H1 (cell line): ENCODE measurements at regions of chr5 and their contacts with region 1.

Region 1: DNA sequence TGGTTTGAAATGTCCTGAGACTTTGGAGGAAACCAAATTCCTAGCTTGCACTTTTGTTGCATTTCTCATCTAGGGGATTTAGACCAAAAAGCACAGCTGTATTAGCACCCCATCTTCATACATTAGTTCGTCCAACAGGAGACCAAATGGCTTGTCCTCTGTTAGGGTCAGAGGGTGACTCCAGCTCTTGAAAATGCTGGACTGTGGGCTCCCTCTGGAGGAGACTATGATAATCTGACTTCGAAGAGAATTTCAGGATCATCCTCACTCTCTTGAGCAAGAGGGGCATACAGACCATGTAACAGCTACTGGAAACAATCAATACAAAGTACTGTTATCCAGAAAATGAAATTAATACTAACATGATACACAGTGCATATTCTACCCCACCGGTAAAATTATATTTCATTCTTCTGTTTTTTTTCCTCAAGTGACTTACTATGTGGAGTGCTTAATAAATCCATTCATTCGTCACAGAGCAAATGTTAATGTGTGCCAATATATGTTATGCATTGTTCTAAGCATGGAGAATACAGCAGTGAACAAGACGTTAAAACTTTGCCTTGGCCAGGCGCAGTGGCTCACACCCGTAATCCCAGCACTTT is 63.7 kb upstream of the PPP2CA start:
- DNase-seq: peak; percentile 46 to 59
- H3K4me3 ChIP-seq: no peak overlapping the region
- H3K27ac ChIP-seq: no peak overlapping the region
- H3K4me1 ChIP-seq: no peaks in the 10 kb centered on the region
- H3K27me3 ChIP-seq: no peaks in the 10 kb centered on the region
- CTCF ChIP-seq: peak in 2 of 3 experiments; percentile 81 to 92; a peak in 3 of 4 replicates
- EP300 ChIP-seq: no peak
- POLR2A ChIP-seq: no peak
- RAD21 ChIP-seq: peak; percentile 98 to 99

Region 2: GRCh38 chr5:133773247-133774202 is 516.1 kb before region 1 on chr5:
- CTCF ChIA-PET with region 1: no interaction called
- POLR2A ChIA-PET with region 1: no interaction called
- DNase-seq: no peak
- H3K4me3 ChIP-seq: no peak overlapping the region
- H3K27ac ChIP-seq: no peak overlapping the region
- H3K4me1 ChIP-seq: no peaks in the 10 kb centered on the region
- H3K27me3 ChIP-seq: no peaks in the 10 kb centered on the region; a peak in 1 of 7 replicates
- CTCF ChIP-seq: peak in 1 of 3 experiments; percentile 22; a peak in 1 of 4 replicates
- EP300 ChIP-seq: no peak
- POLR2A ChIP-seq: no peak
- RAD21 ChIP-seq: peak; percentile 34 to 43

Region 3: DNA sequence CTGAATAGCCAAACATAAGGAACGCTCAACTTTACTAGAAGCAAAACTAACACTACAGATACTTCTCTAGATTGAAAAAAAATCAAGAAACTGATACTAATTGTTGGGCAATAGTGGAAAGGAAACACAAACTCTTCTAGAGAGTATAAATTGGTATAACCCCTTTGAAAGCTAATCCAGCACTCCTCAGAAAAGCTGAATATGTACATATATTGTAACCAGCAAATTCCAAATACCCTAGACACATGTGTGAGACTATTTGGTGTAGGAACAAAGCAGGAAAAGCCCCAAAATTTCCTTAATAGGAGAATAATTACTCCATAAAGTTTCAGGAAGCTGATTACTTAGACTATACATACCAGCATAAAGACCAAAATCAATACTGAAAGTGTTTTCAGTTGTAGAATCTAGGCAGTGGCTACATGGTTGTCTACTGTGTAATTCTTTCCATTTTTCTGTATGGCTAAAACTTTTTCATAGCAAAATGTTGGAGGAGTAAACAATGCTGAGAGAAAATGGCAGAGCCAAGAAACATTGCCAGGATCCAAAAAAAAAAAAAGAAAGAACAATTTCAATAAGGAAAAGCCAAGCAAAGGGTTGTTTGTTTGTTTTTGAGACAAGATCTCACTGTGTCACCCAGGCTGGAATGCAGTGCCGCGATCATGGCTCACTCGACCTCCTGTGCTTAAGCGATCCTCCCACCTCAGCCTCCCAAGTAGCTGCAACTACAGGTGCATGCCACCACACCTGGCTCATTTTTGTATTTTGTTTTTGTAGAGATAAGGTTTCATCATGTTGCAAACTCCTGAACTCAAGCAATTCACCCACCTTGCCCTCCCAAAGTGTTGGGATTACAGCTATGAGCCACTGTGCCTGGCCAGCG is 127.9 kb before region 1 on chr5:
- CTCF ChIA-PET with region 1: interaction called, 13 read pairs
- POLR2A ChIA-PET with region 1: no interaction called
- DNase-seq: no peak
- H3K4me3 ChIP-seq: no peak overlapping the region
- H3K27ac ChIP-seq: no peak overlapping the region
- H3K4me1 ChIP-seq: no peaks in the 10 kb centered on the region
- H3K27me3 ChIP-seq: no peaks in the 10 kb centered on the region
- CTCF ChIP-seq: no peak
- EP300 ChIP-seq: no peak
- POLR2A ChIP-seq: no peak
- RAD21 ChIP-seq: no peak

Region 4: GRCh38 chr5:134184155-134185135 is 105.2 kb before region 1 on chr5:
- CTCF ChIA-PET with region 1: interaction called, 120 read pairs
- POLR2A ChIA-PET with region 1: interaction called, 3 read pairs
- DNase-seq: peak; percentile 38 to 90
- H3K4me3 ChIP-seq: no peak overlapping the region
- H3K27ac ChIP-seq: no peak overlapping the region
- H3K4me1 ChIP-seq: no peaks in the 10 kb centered on the region
- H3K27me3 ChIP-seq: no peaks in the 10 kb centered on the region
- CTCF ChIP-seq: peak; percentile 93 to 97 (median 97)
- EP300 ChIP-seq: no peak
- POLR2A ChIP-seq: no peak
- RAD21 ChIP-seq: peak; percentile 92 to 94

Region 5: DNA sequence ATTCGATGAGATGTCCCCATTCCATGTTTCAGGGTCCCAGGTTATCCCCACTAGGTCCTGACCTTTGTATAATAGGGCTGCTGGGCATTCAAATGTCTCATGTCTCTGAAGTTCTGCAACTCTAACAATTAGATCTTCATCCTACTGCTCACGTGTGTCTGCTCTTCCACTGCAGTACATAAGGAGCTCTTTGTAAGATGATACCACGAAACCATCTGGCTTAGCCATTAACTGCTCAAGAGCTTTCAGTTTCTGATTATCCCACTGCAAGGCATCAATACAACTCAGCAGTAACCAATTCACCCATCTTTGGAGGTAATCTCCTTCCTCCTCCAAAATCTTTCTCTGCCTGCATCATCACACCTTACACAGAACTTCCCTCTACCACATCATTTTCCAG is 13.8 kb before region 1 on chr5:
- CTCF ChIA-PET with region 1: interaction called, 10 read pairs
- POLR2A ChIA-PET with region 1: no interaction called
- DNase-seq: no peak
- H3K4me3 ChIP-seq: no peak overlapping the region
- H3K27ac ChIP-seq: no peak overlapping the region
- H3K4me1 ChIP-seq: no peaks in the 10 kb centered on the region
- H3K27me3 ChIP-seq: no peaks in the 10 kb centered on the region
- CTCF ChIP-seq: no peak
- EP300 ChIP-seq: no peak
- POLR2A ChIP-seq: no peak
- RAD21 ChIP-seq: no peak